CD14-positive monocyte (primary cell): ENCODE measurements at regions of chr16 and their contacts with region 1.

Region 1: DNA sequence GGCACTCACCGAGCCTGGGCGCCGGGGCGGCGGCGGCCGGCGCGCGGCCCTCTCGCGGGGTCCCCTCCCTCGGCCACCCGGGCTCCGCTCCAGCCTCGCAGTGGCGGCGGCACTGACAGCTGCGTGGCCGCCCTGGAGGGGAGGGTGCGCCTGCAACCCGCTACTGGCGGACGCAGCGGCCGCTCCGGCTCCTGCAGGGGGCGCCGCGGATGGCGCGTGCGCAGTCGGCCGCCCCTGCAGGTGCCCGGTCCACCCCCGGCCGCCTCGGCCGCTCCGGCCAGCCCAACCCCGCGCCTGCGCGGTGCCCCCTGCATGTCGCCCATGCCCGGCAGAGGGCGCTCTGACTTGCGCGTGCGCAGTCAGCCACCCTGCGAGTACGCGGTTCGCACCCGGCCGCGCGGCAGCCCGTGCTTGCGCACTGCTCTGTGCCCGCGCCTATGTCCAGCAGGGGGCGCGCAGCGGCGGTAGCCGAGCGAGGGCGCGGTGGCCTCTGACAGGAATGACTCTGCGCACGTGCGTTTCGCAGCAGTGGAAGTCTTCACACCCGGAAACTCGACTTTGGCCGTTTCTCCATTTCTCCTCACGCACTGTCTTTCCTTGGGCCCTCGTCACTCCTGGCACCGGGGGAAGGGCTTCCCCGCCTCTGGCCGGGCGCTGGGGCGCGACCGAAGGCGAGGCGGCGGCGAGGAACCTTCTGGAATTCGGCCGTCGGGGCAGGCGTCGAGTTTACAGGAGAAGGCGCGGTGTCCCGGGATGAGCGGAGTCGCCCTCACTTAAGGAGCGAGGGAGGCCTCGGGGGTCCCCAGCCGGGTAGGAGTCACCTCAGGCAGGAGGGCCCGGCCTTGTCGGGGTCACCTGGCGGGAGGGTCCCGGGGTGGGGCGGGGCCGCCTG is at the start of gene ABCA3:
- DNase-seq: peak; percentile 87 to 94 (median 94)
- H3K4me3 ChIP-seq: peak within 1 kb of the TSS; percentile 47 to 75 (median 49)
- H3K4me3 Mint-ChIP-seq: peak within 1 kb of the TSS; percentile 73 to 93
- H3K27ac ChIP-seq: no peak within 1 kb of the TSS
- H3K27ac Mint-ChIP-seq: peak within 1 kb of the TSS in 2 of 7 donors; percentile 2 to 60
- H3K4me1 ChIP-seq: peaks cover 12 to 16% of the 10 kb centered on the region in 2 donors
- H3K4me1 Mint-ChIP-seq: peaks cover 12% of the 10 kb centered on the region
- H3K27me3 ChIP-seq: peaks cover 30 to 65% of the 10 kb centered on the region in 2 donors
- H3K27me3 Mint-ChIP-seq: peaks cover 43 to 66% (median 47%) of the 10 kb centered on the region in 3 donors
- CTCF ChIP-seq: peak; percentile 100
- polyA plus RNA-seq, gene ABCA3: 0.06 to 1.2 (median 0.68) TPM

Region 2: GRCh38 chr16:2278272-2278608 is 62.6 kb before region 1 on chr16:
- intact Hi-C with region 1: no loop called
- DNase-seq: no peak
- H3K4me3 ChIP-seq: no peak overlapping the region
- H3K4me3 Mint-ChIP-seq: no peak overlapping the region
- H3K27ac ChIP-seq: no peak overlapping the region
- H3K27ac Mint-ChIP-seq: no peak overlapping the region
- H3K4me1 ChIP-seq: peaks cover 0 to under 1% of the 10 kb centered on the region in 2 donors
- H3K4me1 Mint-ChIP-seq: no peaks in the 10 kb centered on the region
- H3K27me3 ChIP-seq: no peaks in the 10 kb centered on the region
- H3K27me3 Mint-ChIP-seq: peaks cover 2 to 3% (median 3%) of the 10 kb centered on the region in 3 donors
- CTCF ChIP-seq: no peak

Region 3: DNA sequence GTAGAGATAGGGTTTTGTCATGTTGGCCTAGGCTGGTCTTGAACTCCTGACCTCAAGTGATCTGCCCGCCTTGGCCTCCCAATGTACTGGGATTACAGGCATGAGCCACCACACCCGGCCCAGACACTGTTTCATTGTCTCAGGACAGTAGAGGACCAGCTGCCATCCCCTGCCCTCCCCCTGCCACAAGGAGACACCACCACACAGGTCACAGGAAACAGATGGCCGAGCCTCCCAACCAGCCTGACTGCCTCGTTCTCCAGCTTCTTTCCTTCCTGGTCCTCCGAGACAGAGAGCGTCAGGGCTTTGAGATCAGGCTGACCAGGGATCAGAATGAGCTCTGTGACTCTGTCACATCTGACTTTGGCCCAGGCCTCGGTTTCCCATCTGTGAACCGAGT is 52.1 kb before region 1 on chr16:
- intact Hi-C with region 1: no loop called
- DNase-seq: no peak
- H3K4me3 ChIP-seq: no peak overlapping the region
- H3K4me3 Mint-ChIP-seq: no peak overlapping the region
- H3K27ac ChIP-seq: no peak overlapping the region
- H3K27ac Mint-ChIP-seq: no peak overlapping the region
- H3K4me1 ChIP-seq: no peaks in the 10 kb centered on the region
- H3K4me1 Mint-ChIP-seq: no peaks in the 10 kb centered on the region
- H3K27me3 ChIP-seq: no peaks in the 10 kb centered on the region
- H3K27me3 Mint-ChIP-seq: peaks cover 0 to 7% (median 2%) of the 10 kb centered on the region in 3 donors
- CTCF ChIP-seq: no peak

Region 4: GRCh38 chr16:2386990-2387389 is 46.2 kb after region 1 on chr16:
- intact Hi-C with region 1: no loop called
- DNase-seq: no peak
- H3K4me3 ChIP-seq: no peak overlapping the region
- H3K4me3 Mint-ChIP-seq: no peak overlapping the region
- H3K27ac ChIP-seq: no peak overlapping the region
- H3K27ac Mint-ChIP-seq: no peak overlapping the region
- H3K4me1 ChIP-seq: no peaks in the 10 kb centered on the region
- H3K4me1 Mint-ChIP-seq: peaks cover 4% of the 10 kb centered on the region
- H3K27me3 ChIP-seq: no peaks in the 10 kb centered on the region
- H3K27me3 Mint-ChIP-seq: peaks cover 0 to 4% (median 0%) of the 10 kb centered on the region in 3 donors
- CTCF ChIP-seq: no peak

Region 5: GRCh38 chr16:2404099-2404498 is 63.3 kb after region 1 on chr16:
- intact Hi-C with region 1: no loop called
- DNase-seq: no peak
- H3K4me3 ChIP-seq: no peak overlapping the region
- H3K4me3 Mint-ChIP-seq: no peak overlapping the region
- H3K27ac ChIP-seq: no peak overlapping the region
- H3K27ac Mint-ChIP-seq: no peak overlapping the region
- H3K4me1 ChIP-seq: no peaks in the 10 kb centered on the region
- H3K4me1 Mint-ChIP-seq: no peaks in the 10 kb centered on the region
- H3K27me3 ChIP-seq: no peaks in the 10 kb centered on the region
- H3K27me3 Mint-ChIP-seq: peaks cover 2 to 8% (median 4%) of the 10 kb centered on the region in 3 donors
- CTCF ChIP-seq: no peak

Region 6: DNA sequence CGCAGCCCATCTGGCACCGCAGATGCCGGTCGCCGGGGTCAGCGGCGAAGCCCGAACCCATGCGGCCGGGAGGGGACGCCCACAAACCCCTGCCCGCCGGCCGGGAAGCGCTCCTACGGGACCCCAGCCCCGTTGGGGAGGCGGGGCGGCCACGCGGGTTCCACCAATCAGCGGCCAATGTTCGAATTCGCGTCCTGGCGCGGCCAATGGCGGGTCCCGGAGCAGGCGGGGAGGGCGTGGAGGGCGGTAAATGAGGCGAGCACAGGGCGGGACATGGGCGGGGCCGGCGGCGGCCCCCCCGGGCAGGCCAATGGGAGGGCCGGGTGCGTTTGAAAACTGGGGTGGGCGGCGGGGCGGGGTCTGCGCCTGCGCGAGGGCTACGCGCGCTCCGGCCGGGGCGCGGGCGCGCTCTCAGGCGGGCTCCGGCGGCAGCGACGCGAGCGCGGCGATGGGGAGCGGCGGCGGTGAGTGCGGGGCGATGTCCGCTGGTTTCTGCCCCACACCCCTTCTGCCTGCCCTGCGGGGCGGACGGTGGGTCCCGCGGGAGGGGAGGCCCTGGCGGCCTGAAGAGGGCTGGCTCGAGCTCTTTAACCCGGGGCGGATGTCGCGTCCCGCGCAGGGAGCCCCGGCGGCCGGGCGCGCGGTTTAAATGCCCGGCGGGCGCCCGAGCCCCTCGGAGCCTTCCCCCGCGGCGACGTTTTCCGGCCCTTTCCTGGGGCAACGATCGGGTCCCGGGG is 88.4 kb after region 1 on chr16 and contains the start of gene CCNF:
- intact Hi-C with region 1: loop called in 1 of 2 experiments (anchors 5 kb)
- DNase-seq: peak; percentile 92 to 95 (median 94)
- H3K4me3 ChIP-seq: peak within 1 kb of the TSS; percentile 74 to 94 (median 92)
- H3K4me3 Mint-ChIP-seq: peak within 1 kb of the TSS; percentile 84 to 94
- H3K27ac ChIP-seq: peak within 1 kb of the TSS in 1 of 2 donors; percentile 10
- H3K27ac Mint-ChIP-seq: peak within 1 kb of the TSS in 4 of 7 donors; percentile 17 to 68 (median 32)
- H3K4me1 ChIP-seq: peaks cover 20 to 28% of the 10 kb centered on the region in 2 donors
- H3K4me1 Mint-ChIP-seq: peaks cover 31% of the 10 kb centered on the region
- H3K27me3 ChIP-seq: no peaks in the 10 kb centered on the region
- H3K27me3 Mint-ChIP-seq: peaks cover 0 to 2% (median 0%) of the 10 kb centered on the region in 3 donors
- CTCF ChIP-seq: no peak
- polyA plus RNA-seq, gene CCNF: 0.34 to 0.97 (median 0.68) TPM

Region 7: DNA sequence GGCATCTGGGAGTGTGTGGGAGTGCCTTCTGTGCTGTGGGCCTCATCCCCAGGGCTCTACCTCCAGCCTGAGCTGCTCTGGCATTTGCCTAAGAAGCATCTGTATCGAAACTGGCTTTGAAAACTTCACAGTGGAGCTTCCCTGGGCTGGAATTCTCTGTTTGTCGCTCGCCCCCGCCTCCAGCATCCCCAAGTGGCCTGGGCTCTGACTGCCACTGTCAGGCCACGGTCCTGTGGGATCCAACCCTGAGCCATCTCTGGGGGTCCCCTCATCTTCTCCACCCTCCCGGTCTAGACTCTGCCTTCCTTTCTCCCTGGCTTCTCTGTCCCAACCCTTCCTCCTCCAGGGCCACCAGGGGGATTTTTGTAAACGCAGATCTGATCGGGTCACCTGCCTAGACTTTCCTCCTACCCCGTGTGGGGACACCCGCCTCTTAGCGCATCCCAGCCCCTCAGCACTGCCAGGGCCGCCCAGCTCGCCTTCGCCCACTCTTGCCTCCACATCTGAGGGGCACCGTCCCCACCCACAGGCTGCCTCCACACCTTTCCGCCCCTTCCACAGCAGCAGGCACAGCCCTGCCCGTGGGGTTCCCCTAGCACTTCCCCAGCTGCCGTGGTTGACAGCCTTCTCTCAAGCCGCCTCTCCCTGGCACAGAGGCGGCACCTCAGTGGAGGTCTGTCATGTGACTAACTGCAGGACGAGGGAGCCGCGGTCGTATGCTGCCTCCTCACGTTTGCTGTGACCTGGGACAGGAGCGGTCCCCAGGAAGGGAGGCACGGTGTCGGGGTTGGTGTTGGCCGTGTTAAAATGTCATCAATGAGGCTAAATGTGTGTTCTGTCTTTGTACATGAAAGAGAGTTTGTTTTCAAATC is 146.1 kb after region 1 on chr16:
- intact Hi-C with region 1: loop called in 1 of 2 experiments (anchors 5 kb)
- DNase-seq: peak; percentile 79 to 88 (median 79)
- H3K4me3 ChIP-seq: peak overlapping the region in 1 of 3 experiments; percentile 10
- H3K4me3 Mint-ChIP-seq: peak overlapping the region; percentile 66 to 86
- H3K27ac ChIP-seq: peak overlapping the region; percentile 2 to 28
- H3K27ac Mint-ChIP-seq: peak overlapping the region; percentile 80 to 93 (median 90)
- H3K4me1 ChIP-seq: peaks cover 29 to 33% of the 10 kb centered on the region in 2 donors
- H3K4me1 Mint-ChIP-seq: peaks cover 44% of the 10 kb centered on the region
- H3K27me3 ChIP-seq: no peaks in the 10 kb centered on the region
- H3K27me3 Mint-ChIP-seq: peaks cover 2 to 4% (median 4%) of the 10 kb centered on the region in 3 donors
- CTCF ChIP-seq: peak; percentile 37